Posterior vena cava (tissue), 2 donors: ENCODE measurements at regions of chr12 and their contacts with region 1.

Region 1: GRCh38 chr12:15165012-15165659 is 56.1 kb downstream of the RERG start:
- DNase-seq: no peak

Region 2: GRCh38 chr12:13534645-13535398 is 1630.3 kb before region 1 on chr12:
- intact Hi-C with region 1: no loop called
- DNase-seq: peak; percentile 86

Region 3: GRCh38 chr12:15179672-15180071 is 14.5 kb after region 1 on chr12:
- intact Hi-C with region 1: no loop called
- DNase-seq: no peak

Region 4: GRCh38 chr12:15200641-15201040 is 35.5 kb after region 1 on chr12:
- intact Hi-C with region 1: loop called in 1 of 2 experiments (anchors 5 kb)
- DNase-seq: no peak

Region 5: DNA sequence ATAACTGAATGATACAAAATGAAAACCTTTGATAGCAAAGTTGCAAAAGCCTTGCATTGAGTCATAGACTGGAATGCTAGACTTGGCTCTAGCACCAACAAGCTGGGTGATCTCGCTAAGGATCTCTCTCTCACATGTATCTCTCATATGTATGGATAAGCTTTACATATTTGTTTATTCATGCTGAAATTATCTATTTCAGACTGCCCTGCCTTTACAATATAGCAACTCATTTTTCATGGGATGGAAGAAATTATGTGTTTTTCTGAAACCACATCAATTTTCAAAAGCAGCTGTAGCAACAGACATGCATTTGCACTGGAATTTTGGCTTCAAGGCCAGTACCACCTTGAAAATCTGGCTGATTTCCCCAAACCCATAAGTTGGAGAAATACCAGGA is 44.6 kb after region 1 on chr12:
- intact Hi-C with region 1: loop called (anchors 5 to 10 kb)
- DNase-seq: no peak